ENCODE measurements at regions of chr2 and their contacts with region 1.

Region 1: GRCh38 chr2:170396799-170397459 is 219.0 kb downstream of the MYO3B start:
- DNase-seq: peak; percentile 14

Region 2: DNA sequence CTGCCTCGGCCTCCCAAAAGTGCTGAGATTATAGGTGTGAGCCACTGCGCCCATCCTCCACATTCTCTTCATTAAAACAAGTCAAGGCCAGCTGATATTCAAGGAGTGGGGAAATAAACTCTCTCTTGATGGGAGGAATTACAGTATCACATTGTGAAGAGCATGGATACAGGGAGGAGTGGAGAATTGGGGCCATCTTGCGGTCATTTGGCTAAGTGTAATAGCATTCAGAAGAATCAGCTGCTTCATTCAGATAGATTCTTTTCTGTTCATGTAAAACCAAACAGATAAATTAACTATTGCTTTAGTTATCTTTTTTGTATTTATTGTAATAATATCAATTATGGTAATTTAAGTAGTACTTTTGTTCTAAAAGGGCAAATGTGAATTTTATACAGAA is 413.4 kb before region 1 on chr2:
- CTCF ChIA-PET with region 1: no interaction called
- POLR2A ChIA-PET with region 1: no interaction called
- DNase-seq: no peak

Region 3: GRCh38 chr2:170377500-170378207 is 19.3 kb before region 1 on chr2:
- CTCF ChIA-PET with region 1: interaction called, 11 read pairs
- POLR2A ChIA-PET with region 1: no interaction called
- DNase-seq: no peak

Measured in HEK293T (cell line).